H1 (cell line): ENCODE measurements at regions of chr6 and their contacts with region 1.

Region 1: DNA sequence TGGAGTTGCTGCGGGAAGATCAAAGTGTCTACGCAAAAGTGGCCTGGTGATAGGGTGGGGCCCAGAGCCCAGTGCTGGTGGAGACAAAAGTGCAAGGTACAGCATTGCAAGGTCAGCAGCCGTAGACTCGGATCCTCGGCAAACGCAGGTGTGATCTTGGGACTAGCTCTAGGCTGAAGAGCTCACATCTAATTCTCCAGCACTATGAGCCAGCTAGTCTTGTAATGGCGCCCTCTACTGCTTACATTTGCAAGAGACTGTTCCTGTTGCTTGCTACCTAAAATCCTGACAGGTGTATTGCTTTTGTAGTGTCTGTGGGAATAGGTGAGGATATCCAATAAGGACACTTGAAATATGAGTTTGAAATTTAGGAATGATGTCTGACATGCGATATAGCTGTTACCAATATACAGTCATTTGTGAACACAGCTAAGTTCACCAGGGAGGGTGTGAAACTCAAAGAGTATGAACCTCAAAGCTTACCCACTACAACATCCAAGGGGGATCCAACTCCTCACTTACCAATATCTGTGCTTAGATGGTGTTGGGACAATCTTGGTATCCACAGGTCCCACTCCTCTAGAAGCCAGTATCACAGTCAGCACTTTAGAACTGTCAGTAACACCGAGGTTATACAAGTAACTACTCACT is 58.4 kb downstream of the PDE7B start:
- DNase-seq: peak; percentile 44 to 60
- H3K4me3 ChIP-seq: no peak overlapping the region
- H3K27ac ChIP-seq: no peak overlapping the region
- H3K4me1 ChIP-seq: no peaks in the 10 kb centered on the region
- H3K27me3 ChIP-seq: no peaks in the 10 kb centered on the region
- CTCF ChIP-seq: peak in 2 of 3 experiments; percentile 83 to 87; a peak in 3 of 4 replicates
- EP300 ChIP-seq: no peak
- POLR2A ChIP-seq: no peak
- RAD21 ChIP-seq: peak; percentile 77 to 87

Region 2: GRCh38 chr6:135675862-135676261 is 234.0 kb before region 1 on chr6:
- CTCF ChIA-PET with region 1: interaction called, 10 read pairs
- POLR2A ChIA-PET with region 1: no interaction called
- DNase-seq: no peak
- H3K4me3 ChIP-seq: no peak overlapping the region
- H3K27ac ChIP-seq: no peak overlapping the region
- H3K4me1 ChIP-seq: no peaks in the 10 kb centered on the region
- H3K27me3 ChIP-seq: no peaks in the 10 kb centered on the region
- CTCF ChIP-seq: peak in 2 of 3 experiments; percentile 62 to 85; a peak in 3 of 4 replicates
- EP300 ChIP-seq: no peak
- POLR2A ChIP-seq: no peak
- RAD21 ChIP-seq: peak; percentile 94 to 98

Region 3: GRCh38 chr6:135890876-135891275 is 19.0 kb before region 1 on chr6:
- CTCF ChIA-PET with region 1: interaction called, 10 read pairs
- POLR2A ChIA-PET with region 1: no interaction called
- DNase-seq: no peak
- H3K4me3 ChIP-seq: no peak overlapping the region
- H3K27ac ChIP-seq: no peak overlapping the region
- H3K4me1 ChIP-seq: no peaks in the 10 kb centered on the region
- H3K27me3 ChIP-seq: no peaks in the 10 kb centered on the region
- CTCF ChIP-seq: no peak
- EP300 ChIP-seq: no peak
- POLR2A ChIP-seq: no peak
- RAD21 ChIP-seq: no peak

Region 4: GRCh38 chr6:135922174-135922573 is 12.3 kb after region 1 on chr6:
- CTCF ChIA-PET with region 1: interaction called, 16 read pairs
- POLR2A ChIA-PET with region 1: interaction called, 3 read pairs
- DNase-seq: peak in 1 of 2 experiments; percentile 23
- H3K4me3 ChIP-seq: peak overlapping the region in 1 of 4 experiments; percentile 33; a peak in 1 of 8 replicates
- H3K27ac ChIP-seq: no peak overlapping the region
- H3K4me1 ChIP-seq: peaks cover 0 to 2% (median 0%) of the 10 kb centered on the region in 4 experiments; a peak in 2 of 7 replicates
- H3K27me3 ChIP-seq: no peaks in the 10 kb centered on the region
- CTCF ChIP-seq: no peak
- EP300 ChIP-seq: no peak
- POLR2A ChIP-seq: no peak
- RAD21 ChIP-seq: no peak